Sigmoid colon (tissue), 7 donors: ENCODE measurements at regions of chr17 and their contacts with region 1.

Region 1: GRCh38 chr17:10844621-10845387 is 6.9 kb upstream of the PIRT start:
- DNase-seq: peak; percentile 90
- H3K4me3 ChIP-seq: peak overlapping the region; percentile 23 to 54 (median 46)
- H3K27ac ChIP-seq: peak overlapping the region in 1 of 4 donors; percentile 17
- H3K4me1 ChIP-seq: peaks cover 0 to 7% (median 5%) of the 10 kb centered on the region in 4 donors
- H3K27me3 ChIP-seq: no peaks in the 10 kb centered on the region
- CTCF ChIP-seq: peak; percentile 77 to 95 (median 88)
- EP300 ChIP-seq: no peak
- POLR2A ChIP-seq: no peak

Region 2: DNA sequence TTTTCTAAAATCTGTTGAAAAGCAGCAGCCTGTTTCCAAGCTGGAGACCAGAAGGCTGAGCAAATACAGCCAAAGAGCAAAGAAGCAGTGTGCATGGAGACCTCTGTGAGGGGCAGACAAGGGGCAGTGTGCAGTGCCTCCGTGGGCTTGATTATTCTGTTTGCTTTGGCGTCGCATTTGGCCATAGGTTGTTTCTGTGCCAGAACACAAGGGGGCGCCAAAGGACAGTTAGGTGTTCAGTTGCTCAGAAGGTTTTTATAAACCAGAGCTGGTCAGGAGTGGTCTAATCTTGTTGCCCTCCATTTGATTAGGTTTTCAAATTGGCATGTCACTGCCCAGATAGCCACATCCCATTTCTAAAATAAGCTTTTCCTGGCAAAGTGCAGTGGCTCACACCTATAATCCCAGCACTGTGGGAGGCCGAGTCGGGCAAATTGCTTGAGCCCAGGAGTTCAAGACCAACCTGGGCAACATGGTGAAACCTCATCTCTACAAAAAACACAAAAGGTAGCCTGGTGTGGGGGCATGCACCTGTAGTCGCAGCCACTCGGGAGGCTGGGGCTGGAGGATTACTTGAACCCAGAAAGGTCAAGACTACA is 198.3 kb before region 1 on chr17:
- intact Hi-C with region 1: loop called (anchors 2 kb)
- DNase-seq: peak; percentile 77
- H3K4me3 ChIP-seq: no peak overlapping the region
- H3K27ac ChIP-seq: no peak overlapping the region
- H3K4me1 ChIP-seq: peaks cover 0 to 5% (median 0%) of the 10 kb centered on the region in 4 donors
- H3K27me3 ChIP-seq: no peaks in the 10 kb centered on the region
- CTCF ChIP-seq: peak; percentile 42 to 87 (median 76)
- EP300 ChIP-seq: no peak
- POLR2A ChIP-seq: no peak

Region 3: GRCh38 chr17:10737168-10737622 is 107.6 kb before region 1 on chr17:
- intact Hi-C with region 1: loop called (anchors 1 kb)
- DNase-seq: peak; percentile 80
- H3K4me3 ChIP-seq: no peak overlapping the region
- H3K27ac ChIP-seq: no peak overlapping the region
- H3K4me1 ChIP-seq: no peaks in the 10 kb centered on the region
- H3K27me3 ChIP-seq: no peaks in the 10 kb centered on the region
- CTCF ChIP-seq: peak; percentile 49 to 79 (median 68)
- EP300 ChIP-seq: no peak
- POLR2A ChIP-seq: no peak